ENCODE measurements at regions of chr10 and their contacts with region 1.

Region 1: GRCh38 chr10:29689001-29689400 is 54.2 kb upstream of the SVIL start:
- DNase-seq: peak in 1 of 2 experiments; percentile 16
- H3K4me3 ChIP-seq: no peak overlapping the region
- H3K27ac ChIP-seq: no peak overlapping the region; the same call in 1 of the 2 replicates
- H3K4me1 ChIP-seq: peaks cover 14% of the 10 kb centered on the region
- H3K27me3 ChIP-seq: no peaks in the 10 kb centered on the region
- CTCF ChIP-seq: no peak

Region 2: DNA sequence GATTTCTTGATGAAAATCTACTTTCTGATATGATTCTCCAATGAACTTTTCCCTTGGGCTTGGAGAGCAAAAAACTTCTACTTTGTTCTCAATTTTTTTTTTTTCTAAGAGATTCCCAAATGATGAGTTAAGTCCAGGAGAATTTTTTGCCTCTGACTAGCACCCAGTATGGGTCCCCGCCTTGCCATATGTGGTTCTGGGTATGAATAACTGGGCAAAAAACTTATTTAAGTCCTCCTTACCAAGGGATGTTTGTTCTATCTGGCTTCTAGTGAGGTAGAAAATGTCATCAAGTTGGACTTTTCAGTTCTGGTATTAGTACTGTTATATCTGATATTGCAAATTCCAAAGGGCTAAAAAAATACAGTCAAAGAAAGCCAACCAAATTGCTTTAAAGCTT is 547.9 kb before region 1 on chr10:
- CTCF ChIA-PET with region 1: no interaction called
- POLR2A ChIA-PET with region 1: no interaction called
- intact Hi-C with region 1: no loop called
- DNase-seq: peak; percentile 40 to 74
- H3K4me3 ChIP-seq: no peak overlapping the region
- H3K27ac ChIP-seq: peak overlapping the region; percentile 32
- H3K4me1 ChIP-seq: peaks cover 19% of the 10 kb centered on the region
- H3K27me3 ChIP-seq: no peaks in the 10 kb centered on the region
- CTCF ChIP-seq: no peak

Region 3: GRCh38 chr10:29575098-29575455 is 113.9 kb before region 1 on chr10:
- CTCF ChIA-PET with region 1: no interaction called
- POLR2A ChIA-PET with region 1: interaction called, 3 read pairs
- intact Hi-C with region 1: loop called (anchors 2 kb)
- DNase-seq: no peak
- H3K4me3 ChIP-seq: no peak overlapping the region
- H3K27ac ChIP-seq: no peak overlapping the region
- H3K4me1 ChIP-seq: no peaks in the 10 kb centered on the region
- H3K27me3 ChIP-seq: no peaks in the 10 kb centered on the region
- CTCF ChIP-seq: no peak